Calu3 (cell line): ENCODE measurements at regions of chr1 and their contacts with region 1.

Region 1: DNA sequence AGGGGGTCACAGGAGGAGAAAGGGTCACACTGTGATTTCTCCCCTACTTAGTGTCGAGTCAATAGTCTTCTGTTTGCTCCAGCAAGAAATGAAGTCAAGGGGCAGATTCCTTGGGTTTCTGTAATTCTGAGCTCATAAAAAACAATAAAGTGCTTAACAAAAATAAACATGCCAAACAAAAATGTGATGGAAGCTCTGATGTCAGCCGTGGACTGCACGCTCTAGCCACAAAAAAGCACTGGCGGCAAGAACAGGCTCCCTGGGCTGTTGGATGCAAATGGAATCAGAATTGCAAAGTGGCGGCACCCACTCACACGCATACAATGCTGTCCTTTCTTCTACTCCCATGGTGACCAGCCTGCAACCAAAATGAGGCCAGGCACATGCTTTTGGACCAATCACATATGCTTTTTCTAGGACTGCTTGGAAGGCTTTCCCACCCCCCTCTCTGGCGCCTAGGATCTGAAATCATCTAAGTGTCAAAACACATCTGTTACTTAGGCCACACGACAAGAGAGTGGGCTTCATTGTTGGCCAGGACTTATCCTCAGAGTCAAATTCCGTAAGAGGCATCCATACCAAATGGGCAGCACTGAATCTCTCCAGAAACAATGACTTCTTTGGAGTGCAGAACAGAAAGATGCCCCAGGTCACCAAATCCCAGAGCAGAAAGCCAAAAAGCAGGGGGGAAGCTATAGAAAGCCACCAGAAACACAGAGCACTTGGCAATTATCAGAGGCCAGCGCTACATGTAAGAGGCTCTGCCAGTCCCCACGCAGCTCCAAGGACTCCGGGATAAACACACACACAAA is 9.2 kb downstream of the C1orf198 start:
- DNase-seq: peak; percentile 16
- H3K4me3 Mint-ChIP-seq: peak overlapping the region; percentile 44
- H3K27ac Mint-ChIP-seq: peak overlapping the region; percentile 95
- H3K4me1 Mint-ChIP-seq: peaks cover 96% of the 10 kb centered on the region
- H3K27me3 Mint-ChIP-seq: no peaks in the 10 kb centered on the region
- CTCF ChIP-seq: no peak

Region 2: DNA sequence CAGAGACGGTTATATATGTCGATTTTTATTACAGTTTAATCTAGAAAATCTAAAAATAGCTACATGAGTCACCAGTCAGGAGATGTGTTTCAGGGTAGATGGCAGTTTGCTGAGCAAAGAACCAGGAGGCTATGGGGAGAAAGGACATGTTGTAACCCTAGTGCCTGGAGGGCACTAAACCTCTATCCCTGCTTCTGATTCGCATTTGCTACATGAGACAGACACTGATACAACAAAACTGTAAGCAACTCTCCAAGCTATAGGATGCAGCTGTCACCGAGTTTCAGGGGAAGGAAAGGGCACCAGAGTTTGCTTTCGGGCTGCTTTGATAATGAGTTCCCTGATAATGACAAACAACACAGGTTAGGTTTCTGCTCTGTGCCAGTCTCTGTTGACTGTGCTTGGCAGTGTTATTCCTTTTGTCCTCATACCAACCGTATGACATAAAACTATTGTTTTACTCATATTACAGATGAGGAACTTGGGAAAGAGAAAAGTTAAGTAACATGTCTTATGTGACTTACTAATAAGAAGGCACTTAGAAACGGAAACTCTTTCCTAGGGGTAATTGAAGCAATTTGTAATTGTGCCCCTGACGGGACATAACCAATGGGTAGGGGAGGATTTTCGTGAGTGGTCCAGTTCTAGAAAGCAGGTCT is 33.9 kb before region 1 on chr1:
- CTCF ChIA-PET with region 1: interaction called, 4 read pairs
- intact Hi-C with region 1: loop called (anchors 2 kb)
- DNase-seq: peak; percentile 50
- H3K4me3 Mint-ChIP-seq: peak overlapping the region; percentile 55
- H3K27ac Mint-ChIP-seq: peak overlapping the region; percentile 99
- H3K4me1 Mint-ChIP-seq: peaks cover 52% of the 10 kb centered on the region
- H3K27me3 Mint-ChIP-seq: no peaks in the 10 kb centered on the region
- CTCF ChIP-seq: no peak

Region 3: DNA sequence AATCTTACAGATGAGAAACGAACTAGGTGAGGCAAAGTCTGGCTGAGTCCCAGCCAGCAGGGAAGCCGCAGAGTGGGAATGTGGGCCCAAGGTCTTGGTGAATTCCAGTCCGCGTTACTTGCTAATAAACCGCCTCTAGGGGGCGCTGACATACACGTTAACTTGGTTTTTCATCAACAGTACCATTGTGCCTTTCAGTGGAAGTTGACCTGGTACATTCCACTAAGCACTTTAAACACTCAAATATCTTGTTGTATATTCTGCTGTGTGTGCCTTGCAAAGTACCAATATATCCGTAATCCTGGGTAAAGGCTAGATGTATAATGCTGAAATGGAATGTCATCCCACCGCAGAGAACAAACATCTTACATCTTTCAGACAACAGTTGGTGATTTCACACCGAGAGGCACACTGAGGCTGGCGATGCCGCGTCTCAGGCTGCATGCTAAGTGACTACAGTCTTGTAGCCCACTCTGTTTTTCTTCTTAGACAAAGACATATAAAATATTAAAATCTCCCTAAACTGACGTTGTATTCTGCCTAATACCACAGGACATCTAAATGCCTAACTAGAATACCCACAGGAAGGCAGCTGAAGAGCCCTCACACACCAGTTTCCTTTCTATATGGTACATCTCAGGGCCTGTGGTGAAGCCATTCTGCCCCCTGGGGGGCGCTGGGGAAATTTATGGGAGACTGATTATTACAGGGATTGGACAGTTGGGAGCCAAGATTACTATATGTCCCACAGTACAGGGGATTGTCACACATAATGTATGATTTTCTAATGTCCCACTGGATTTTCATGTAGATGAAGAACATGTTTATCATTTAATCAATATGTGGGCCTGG is 58.4 kb after region 1 on chr1:
- CTCF ChIA-PET with region 1: interaction called, 3 read pairs
- intact Hi-C with region 1: loop called (anchors 5 kb)
- DNase-seq: peak; percentile 80
- H3K4me3 Mint-ChIP-seq: no peak overlapping the region
- H3K27ac Mint-ChIP-seq: no peak overlapping the region
- H3K4me1 Mint-ChIP-seq: no peaks in the 10 kb centered on the region
- H3K27me3 Mint-ChIP-seq: no peaks in the 10 kb centered on the region
- CTCF ChIP-seq: peak; percentile 61